ENCODE measurements at regions of chr18 and their contacts with region 1.

Region 1: DNA sequence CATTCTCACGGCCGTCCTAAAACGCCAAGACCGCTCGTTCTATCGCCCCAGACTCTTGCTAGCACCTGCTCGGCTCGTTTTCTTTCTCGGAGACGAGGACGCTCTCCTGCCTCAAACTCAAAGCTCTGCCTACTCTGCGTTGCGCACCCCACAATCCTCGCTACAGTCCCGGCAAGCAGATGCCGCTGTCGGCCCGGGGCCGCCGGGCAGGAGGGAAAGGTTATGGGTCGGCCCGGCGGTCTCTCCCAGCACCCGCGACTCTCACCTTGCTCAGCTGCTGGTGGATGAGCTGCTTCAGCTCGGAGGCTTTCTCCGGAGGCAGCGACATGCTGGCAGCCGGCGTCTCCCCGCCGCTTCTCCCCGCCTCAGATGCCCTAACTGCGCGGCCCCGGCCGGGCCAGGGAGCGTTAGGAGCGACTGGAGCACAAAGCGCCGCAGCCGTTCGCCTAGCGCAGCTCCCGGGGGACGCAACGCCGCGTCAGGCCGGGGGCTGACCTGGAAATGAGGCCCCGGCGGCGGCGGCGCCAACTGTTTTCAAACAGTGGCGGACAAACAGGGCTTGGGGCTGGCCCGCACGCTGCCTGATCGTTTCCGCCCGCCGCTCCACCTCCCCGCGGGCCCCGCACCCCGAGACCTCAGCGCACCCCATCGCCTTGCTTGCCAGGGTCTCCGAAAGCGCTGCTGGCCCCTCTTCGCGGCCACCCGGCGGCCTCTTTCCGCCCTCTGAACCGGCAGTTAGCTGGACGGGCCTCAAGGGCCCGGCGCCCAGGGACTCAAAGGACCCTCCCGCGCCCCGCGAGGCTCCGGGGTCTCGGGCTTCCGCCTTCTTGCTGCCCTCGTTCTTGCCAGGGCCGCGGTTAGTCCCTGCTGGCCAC is at the starts of genes CEP76 and PSMG2:
- DNase-seq: peak; percentile 81
- H3K4me3 Mint-ChIP-seq: peak within 1 kb of the TSS; percentile 100
- H3K27ac Mint-ChIP-seq: peak within 1 kb of the TSS; percentile 99
- H3K4me1 Mint-ChIP-seq: peaks cover 31% of the 10 kb centered on the region
- H3K27me3 Mint-ChIP-seq: no peaks in the 10 kb centered on the region
- total RNA-seq, gene CEP76: 14.5 and 17.6 TPM in 2 replicates
- total RNA-seq, gene PSMG2: 105 and 107 TPM in 2 replicates

Region 2: GRCh38 chr18:12947355-12948041 is 245.0 kb after region 1 on chr18 and contains the start of gene SEH1L:
- intact Hi-C with region 1: loop called (anchors 1 kb)
- DNase-seq: peak; percentile 96
- H3K4me3 Mint-ChIP-seq: peak within 1 kb of the TSS; percentile 98
- H3K27ac Mint-ChIP-seq: peak within 1 kb of the TSS; percentile 99
- H3K4me1 Mint-ChIP-seq: peaks cover 29% of the 10 kb centered on the region
- H3K27me3 Mint-ChIP-seq: no peaks in the 10 kb centered on the region
- total RNA-seq, gene SEH1L: 112 and 115 TPM in 2 replicates

Region 3: DNA sequence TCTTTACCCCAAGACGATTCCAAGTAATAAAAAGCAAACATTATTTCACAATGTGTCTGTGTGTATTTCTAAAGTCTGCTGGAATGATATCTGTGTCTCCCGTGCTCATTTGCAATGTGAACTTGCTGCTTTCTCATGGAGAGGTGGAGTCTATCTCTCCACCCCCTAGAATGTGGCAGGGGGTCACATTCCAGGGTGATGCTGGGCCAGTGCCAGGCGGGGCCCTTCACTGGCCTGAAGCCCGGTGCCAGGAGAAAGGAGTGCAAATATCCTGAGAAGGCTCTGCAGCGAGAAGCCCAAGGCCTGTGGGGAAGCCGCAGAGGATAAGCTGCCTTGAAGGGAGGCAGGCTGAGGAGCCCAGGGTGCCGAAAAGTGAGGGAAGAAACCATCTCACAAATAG is 489.3 kb after region 1 on chr18:
- intact Hi-C with region 1: no loop called
- DNase-seq: no peak
- H3K4me3 Mint-ChIP-seq: no peak overlapping the region
- H3K27ac Mint-ChIP-seq: no peak overlapping the region
- H3K4me1 Mint-ChIP-seq: no peaks in the 10 kb centered on the region
- H3K27me3 Mint-ChIP-seq: peaks cover 23% of the 10 kb centered on the region